ENCODE measurements at regions of chr5 and their contacts with region 1.

Region 1: DNA sequence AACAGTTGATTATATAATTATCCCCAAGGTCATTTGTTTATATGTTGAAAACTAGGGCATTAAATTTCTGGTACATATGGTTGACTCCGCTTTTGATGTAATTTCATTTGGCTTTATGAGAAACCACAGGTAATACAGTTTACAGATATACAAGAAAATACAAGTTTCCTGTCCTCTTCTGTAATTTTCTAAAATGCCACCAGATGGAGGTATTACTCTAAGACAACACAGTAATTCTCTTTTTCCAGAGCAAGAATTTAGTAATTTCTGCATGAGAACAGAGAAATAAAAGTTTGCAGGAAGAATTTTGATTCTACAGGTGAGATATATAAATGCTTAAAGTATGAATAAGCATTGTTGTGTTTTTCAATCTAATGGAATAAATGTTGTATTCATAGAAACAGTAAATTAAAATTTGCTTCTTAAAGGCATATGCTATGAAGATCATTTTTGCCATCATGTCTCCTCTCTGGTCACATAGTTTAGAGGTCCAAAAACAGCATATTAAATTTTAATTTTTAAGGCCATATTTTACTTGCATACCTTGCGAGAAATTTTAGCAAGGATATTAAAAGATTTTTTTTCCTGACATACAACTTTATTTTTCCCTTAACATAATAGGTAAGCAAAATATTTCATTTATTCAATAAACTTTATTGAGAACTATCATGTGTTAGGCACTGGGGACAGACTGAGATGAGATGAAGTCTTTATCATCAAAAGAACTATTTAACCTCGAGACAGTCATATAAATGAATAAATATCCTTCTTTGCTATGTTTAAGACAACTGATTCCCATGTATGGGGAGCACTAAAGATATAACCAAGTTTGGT is 22.7 kb downstream of the CHD1 start:
- DNase-seq: no peak
- H3K4me3 Mint-ChIP-seq: no peak overlapping the region
- H3K27ac Mint-ChIP-seq: no peak overlapping the region
- H3K4me1 Mint-ChIP-seq: peaks cover 56% of the 10 kb centered on the region
- H3K27me3 Mint-ChIP-seq: no peaks in the 10 kb centered on the region

Region 2: GRCh38 chr5:98865690-98866089 is 40.4 kb before region 1 on chr5:
- intact Hi-C with region 1: loop called (anchors 5 kb)
- DNase-seq: no peak
- H3K4me3 Mint-ChIP-seq: no peak overlapping the region
- H3K27ac Mint-ChIP-seq: no peak overlapping the region
- H3K4me1 Mint-ChIP-seq: peaks cover 4% of the 10 kb centered on the region
- H3K27me3 Mint-ChIP-seq: no peaks in the 10 kb centered on the region

Region 3: DNA sequence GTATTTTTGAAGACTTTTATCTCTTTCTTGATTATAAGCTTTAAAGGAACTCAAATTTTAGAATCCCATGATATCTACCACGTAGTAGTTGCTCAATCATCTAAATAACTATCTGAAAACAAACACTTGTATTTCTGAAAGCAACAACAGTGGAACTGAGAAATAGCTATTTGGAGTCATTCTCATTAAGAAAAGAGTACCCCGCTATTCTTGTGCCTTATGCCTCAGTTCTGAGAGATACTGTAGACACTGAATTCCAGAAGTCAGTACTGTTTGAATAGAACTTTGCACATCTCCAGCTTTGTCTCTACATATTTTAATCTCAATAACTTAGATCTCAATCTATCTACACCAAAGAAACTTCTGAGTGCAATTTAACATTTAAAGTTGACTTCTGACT is 11.4 kb after region 1 on chr5:
- intact Hi-C with region 1: loop called (anchors 1 kb)
- DNase-seq: no peak
- H3K4me3 Mint-ChIP-seq: no peak overlapping the region
- H3K27ac Mint-ChIP-seq: no peak overlapping the region
- H3K4me1 Mint-ChIP-seq: peaks cover 70% of the 10 kb centered on the region
- H3K27me3 Mint-ChIP-seq: no peaks in the 10 kb centered on the region

Region 4: DNA sequence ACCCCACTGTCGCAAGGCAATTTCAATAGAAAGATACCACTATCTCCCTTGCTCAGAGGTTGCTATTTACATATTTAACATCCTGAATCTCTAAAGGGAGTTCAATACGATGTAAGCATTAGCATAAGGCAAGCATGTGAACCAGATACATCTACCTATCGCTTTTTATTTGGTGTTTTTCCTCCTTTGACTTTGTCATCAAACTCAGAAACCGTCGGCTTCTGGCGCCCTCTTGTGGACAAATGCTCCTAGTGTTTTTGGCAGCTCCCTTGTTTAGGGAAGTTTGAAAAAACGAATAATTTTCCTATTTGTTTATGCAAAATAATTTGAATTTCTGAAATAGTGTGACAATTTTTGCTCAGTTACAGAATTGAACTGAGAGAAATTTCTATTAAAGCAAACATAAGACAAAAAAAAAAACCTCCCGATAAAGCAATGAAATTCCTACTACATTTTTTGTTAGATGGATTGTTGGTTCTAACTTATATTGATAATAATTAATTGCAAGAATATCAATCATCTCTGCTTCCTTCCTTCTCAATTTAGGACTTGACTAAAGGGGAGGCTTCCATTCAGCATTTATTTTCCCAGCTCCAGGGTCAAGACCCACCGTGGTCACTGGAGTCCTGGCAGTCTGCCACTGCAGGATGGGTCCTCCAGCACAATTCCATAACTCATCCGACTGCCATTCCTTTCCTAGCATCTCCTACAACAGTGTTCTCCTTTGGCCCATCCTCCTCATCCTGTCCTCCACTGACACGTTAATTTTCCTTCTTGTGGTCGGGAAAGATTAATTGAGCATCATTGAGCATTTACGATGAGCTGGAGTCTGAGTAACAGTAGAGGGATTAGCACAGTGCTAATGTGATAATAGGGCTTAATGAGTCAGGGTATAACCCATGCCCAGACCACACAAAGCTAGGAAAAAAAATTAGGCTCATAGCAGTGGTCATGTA is 154.5 kb after region 1 on chr5:
- intact Hi-C with region 1: loop called (anchors 1 kb)
- DNase-seq: peak; percentile 69
- H3K4me3 Mint-ChIP-seq: no peak overlapping the region
- H3K27ac Mint-ChIP-seq: no peak overlapping the region
- H3K4me1 Mint-ChIP-seq: peaks cover 5% of the 10 kb centered on the region
- H3K27me3 Mint-ChIP-seq: peaks cover 16% of the 10 kb centered on the region

Region 5: GRCh38 chr5:99070822-99071221 is 164.7 kb after region 1 on chr5:
- intact Hi-C with region 1: no loop called
- DNase-seq: no peak
- H3K4me3 Mint-ChIP-seq: no peak overlapping the region
- H3K27ac Mint-ChIP-seq: no peak overlapping the region
- H3K4me1 Mint-ChIP-seq: no peaks in the 10 kb centered on the region
- H3K27me3 Mint-ChIP-seq: peaks cover 1% of the 10 kb centered on the region